ENCODE measurements at regions of chr13 and their contacts with region 1.

Region 1: DNA sequence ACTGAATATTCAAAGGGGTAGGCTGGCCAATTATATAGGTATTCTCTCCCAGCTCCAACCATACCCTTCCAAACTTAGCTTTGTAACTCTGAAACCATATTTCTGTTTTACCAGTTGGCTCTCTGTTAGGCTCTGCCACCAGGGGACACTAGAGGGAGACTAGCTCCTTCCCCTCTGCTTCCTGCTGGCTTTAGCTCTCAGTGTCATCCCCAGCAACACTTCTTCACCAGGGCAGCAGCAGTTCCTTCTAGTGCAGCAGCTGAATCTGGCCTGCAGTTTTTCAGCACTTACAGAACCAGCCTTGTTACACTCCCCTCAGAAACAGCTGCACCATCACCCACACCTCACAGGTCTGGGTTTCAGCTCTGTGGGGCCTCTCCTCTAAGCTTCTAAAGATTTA is 51.0 kb upstream of the DOCK9 start:
- DNase-seq: peak; percentile 68
- ATAC-seq: peak; percentile 81
- H3K4me3 Mint-ChIP-seq: no peak overlapping the region
- H3K27ac Mint-ChIP-seq: no peak overlapping the region
- H3K4me1 Mint-ChIP-seq: peaks cover 53% of the 10 kb centered on the region
- H3K27me3 Mint-ChIP-seq: no peaks in the 10 kb centered on the region

Region 2: GRCh38 chr13:98717256-98717655 is 311.6 kb before region 1 on chr13:
- CTCF ChIA-PET with region 1: no interaction called
- POLR2A ChIA-PET with region 1: no interaction called
- DNase-seq: no peak
- ATAC-seq: no peak
- H3K4me3 Mint-ChIP-seq: no peak overlapping the region
- H3K27ac Mint-ChIP-seq: no peak overlapping the region
- H3K4me1 Mint-ChIP-seq: no peaks in the 10 kb centered on the region
- H3K27me3 Mint-ChIP-seq: peaks cover 4% of the 10 kb centered on the region

Region 3: DNA sequence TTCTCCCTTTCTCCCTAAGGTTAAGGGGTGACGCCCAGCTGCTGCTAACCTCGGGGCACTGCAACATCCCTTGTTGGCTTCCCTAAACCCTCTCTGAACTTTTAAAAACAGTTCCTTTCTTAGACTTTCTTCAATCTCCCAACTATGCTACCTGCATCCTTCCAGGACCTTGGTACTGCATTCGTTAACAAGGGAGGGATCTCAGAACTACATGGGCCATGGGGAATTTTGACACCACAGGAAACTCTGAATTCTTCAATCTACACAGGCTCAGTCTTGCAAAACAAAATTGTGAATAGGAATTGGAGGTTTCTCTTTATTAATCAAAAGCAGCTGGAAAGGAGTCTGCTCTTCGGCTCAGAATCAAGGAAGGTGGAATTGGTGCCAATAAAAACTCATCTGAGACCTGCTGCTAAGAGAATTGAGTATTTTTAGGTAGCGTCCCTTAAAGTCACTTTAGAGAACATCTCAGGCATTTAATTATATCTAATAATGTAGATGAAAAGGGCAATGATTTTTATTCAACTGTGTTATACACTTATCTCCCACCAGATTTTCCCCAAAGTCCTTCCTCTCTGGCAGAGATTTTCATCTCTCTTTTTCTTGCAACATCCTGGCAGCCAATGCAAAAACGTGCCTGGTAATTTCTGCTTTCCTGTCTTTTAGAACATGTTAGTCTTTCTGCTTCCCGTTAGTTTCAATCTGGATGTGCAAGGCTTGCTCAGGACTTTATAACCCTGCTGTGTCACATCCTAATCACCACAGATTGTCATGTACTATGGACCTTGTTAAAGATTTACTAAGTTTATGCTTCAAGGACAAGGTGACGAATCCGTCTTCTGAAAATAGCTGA is 207.3 kb before region 1 on chr13:
- CTCF ChIA-PET with region 1: no interaction called
- POLR2A ChIA-PET with region 1: no interaction called
- DNase-seq: no peak
- ATAC-seq: no peak
- H3K4me3 Mint-ChIP-seq: no peak overlapping the region
- H3K27ac Mint-ChIP-seq: peak overlapping the region; percentile 51
- H3K4me1 Mint-ChIP-seq: peaks cover 20% of the 10 kb centered on the region
- H3K27me3 Mint-ChIP-seq: no peaks in the 10 kb centered on the region

Region 4: DNA sequence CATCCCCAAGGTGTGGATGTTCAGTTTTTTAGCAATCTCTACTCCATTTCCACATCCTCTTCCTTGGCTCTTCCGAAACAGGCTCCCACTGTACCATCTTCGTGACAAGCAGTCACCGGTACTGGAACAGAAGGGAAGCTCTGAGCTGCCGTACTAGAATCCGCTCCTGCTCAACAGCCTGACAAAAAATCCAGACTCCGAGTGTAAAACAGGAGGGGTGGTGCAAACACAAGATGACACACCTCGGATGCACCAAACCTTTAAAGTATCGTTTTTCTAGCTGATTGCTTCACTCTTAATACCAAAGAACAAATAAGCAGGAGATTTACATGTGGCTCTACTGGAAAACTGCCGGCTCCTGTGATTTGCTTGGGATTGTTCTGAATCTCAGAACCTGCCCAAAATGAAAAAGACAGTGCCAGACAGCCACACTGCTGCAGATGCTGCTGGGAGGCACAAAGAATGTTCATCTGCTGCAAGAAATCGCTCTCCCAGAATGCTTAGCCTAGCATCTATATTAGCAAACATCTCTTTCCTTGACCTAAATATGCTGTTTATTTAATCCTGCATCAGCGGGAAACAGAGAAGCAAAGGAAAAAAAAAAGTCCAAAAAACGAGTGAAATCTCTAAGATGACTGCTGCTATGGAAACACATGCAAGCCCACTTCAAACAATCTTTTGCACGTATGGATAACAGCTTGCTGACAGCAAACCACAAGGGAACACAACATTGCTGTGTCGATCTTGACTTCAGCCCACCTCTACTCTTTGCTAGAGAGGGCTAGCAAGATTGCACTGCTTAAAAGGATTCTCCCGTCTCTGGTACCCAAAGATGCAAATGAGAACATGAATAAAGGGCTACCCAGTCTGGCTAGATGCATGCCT is 13.0 kb before region 1 on chr13:
- CTCF ChIA-PET with region 1: interaction called, 17 read pairs
- POLR2A ChIA-PET with region 1: no interaction called
- DNase-seq: no peak
- ATAC-seq: peak; percentile 83
- H3K4me3 Mint-ChIP-seq: no peak overlapping the region
- H3K27ac Mint-ChIP-seq: peak overlapping the region; percentile 22
- H3K4me1 Mint-ChIP-seq: peaks cover 29% of the 10 kb centered on the region
- H3K27me3 Mint-ChIP-seq: no peaks in the 10 kb centered on the region

Region 5: GRCh38 chr13:99045396-99045795 is 16.5 kb after region 1 on chr13:
- CTCF ChIA-PET with region 1: interaction called, 21 read pairs
- POLR2A ChIA-PET with region 1: interaction called, 6 read pairs
- DNase-seq: no peak
- ATAC-seq: no peak
- H3K4me3 Mint-ChIP-seq: peak overlapping the region; percentile 67
- H3K27ac Mint-ChIP-seq: peak overlapping the region; percentile 93
- H3K4me1 Mint-ChIP-seq: peaks cover 94% of the 10 kb centered on the region
- H3K27me3 Mint-ChIP-seq: no peaks in the 10 kb centered on the region

Region 6: GRCh38 chr13:99087096-99087953 is 58.4 kb after region 1 on chr13:
- CTCF ChIA-PET with region 1: interaction called, 12 read pairs
- POLR2A ChIA-PET with region 1: interaction called, 3 read pairs
- DNase-seq: peak; percentile 95
- ATAC-seq: peak; percentile 87
- H3K4me3 Mint-ChIP-seq: peak overlapping the region; percentile 96
- H3K27ac Mint-ChIP-seq: peak overlapping the region; percentile 97
- H3K4me1 Mint-ChIP-seq: peaks cover 37% of the 10 kb centered on the region
- H3K27me3 Mint-ChIP-seq: no peaks in the 10 kb centered on the region